Aorta (tissue), 5 donors: ENCODE measurements at regions of chrX and their contacts with region 1.

Region 1: DNA sequence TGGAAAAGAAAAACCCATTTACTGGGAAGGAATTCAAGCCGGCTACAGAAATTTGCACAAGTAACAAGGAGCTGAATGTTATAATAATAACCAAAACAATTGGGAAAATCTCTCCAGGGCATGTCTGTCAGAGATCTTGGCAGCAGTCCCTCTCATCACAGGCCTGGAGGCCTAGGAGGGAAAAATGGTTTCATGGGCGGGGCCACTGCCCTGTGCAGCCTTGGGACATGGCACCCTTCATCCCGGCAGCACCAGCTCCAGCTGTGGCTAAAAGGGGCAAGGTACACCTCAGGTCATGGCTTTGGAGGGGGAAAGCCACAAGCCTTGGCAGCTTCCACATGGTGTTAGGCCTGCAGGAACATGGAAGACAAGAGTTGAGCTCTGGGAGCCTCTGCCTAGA is 513.1 kb upstream of the CNKSR2 start:
- DNase-seq: no peak
- ATAC-seq: no peak
- H3K4me3 ChIP-seq: no peak overlapping the region
- H3K27ac ChIP-seq: no peak overlapping the region
- H3K4me1 ChIP-seq: no peaks in the 10 kb centered on the region
- H3K27me3 ChIP-seq: no peaks in the 10 kb centered on the region

Region 2: GRCh38 chrX:20452487-20452886 is 408.6 kb before region 1 on chrX:
- intact Hi-C with region 1: no loop called
- DNase-seq: no peak
- ATAC-seq: no peak
- H3K4me3 ChIP-seq: no peak overlapping the region
- H3K27ac ChIP-seq: no peak overlapping the region
- H3K4me1 ChIP-seq: no peaks in the 10 kb centered on the region
- H3K27me3 ChIP-seq: no peaks in the 10 kb centered on the region

Region 3: GRCh38 chrX:20838477-20838876 is 22.6 kb before region 1 on chrX:
- intact Hi-C with region 1: loop called in 1 of 2 experiments (anchors 2 kb)
- DNase-seq: no peak
- ATAC-seq: no peak
- H3K4me3 ChIP-seq: no peak overlapping the region
- H3K27ac ChIP-seq: no peak overlapping the region
- H3K4me1 ChIP-seq: no peaks in the 10 kb centered on the region
- H3K27me3 ChIP-seq: no peaks in the 10 kb centered on the region